ENCODE measurements at regions of chrX and their contacts with region 1.

Region 1: DNA sequence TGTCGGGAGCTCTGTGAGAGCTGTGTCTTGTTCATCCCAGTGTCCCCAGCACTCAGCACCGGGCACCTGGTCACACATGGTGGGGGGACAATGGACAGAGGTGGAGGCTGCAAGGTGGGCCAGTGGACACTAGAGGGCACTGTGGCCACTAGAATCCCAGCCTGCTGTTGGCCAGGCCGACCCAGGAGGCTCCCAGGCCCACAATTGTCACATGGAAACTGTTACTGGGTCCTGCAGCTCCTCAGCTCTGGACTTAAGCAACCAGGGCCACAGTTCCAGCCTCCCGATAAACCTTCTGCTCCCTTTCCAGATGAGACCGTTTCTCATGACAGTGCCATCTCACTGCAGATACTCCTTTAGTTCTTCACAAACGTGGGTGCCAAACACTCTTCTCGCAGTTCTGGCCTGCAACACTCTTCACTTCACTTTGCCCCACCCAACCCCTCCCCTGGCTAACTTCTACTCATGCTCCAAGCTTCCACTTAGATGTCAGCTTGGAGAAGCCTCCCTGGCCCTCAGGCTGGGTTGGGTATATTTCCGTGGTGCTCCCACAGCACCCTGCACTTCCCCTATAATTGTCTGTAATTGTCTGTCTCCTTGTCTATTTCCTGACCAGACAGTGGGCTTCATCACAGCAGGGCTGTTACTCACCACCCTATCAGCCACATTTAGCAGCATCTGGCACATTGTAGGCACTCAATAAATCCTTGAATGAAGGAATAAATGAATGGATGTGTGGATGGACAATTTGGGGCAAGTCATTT is 3.5 kb upstream of the IQSEC2 start:
- DNase-seq: peak; percentile 62
- H3K4me3 Mint-ChIP-seq: no peak overlapping the region
- H3K27ac Mint-ChIP-seq: no peak overlapping the region
- H3K4me1 Mint-ChIP-seq: peaks cover 33% of the 10 kb centered on the region
- H3K27me3 Mint-ChIP-seq: peaks cover 69% of the 10 kb centered on the region
- CTCF ChIP-seq: peak; percentile 86

Region 2: GRCh38 chrX:53224860-53225797 is 59.7 kb before region 1 on chrX and contains the start of gene KDM5C:
- CTCF ChIA-PET with region 1: interaction called, 12 read pairs
- POLR2A ChIA-PET with region 1: interaction called, 14 read pairs
- intact Hi-C with region 1: no loop called
- DNase-seq: peak; percentile 96
- H3K4me3 Mint-ChIP-seq: peak within 1 kb of the TSS; percentile 98
- H3K27ac Mint-ChIP-seq: peak within 1 kb of the TSS; percentile 100
- H3K4me1 Mint-ChIP-seq: peaks cover 22% of the 10 kb centered on the region
- H3K27me3 Mint-ChIP-seq: peaks cover 6% of the 10 kb centered on the region
- CTCF ChIP-seq: no peak
- total RNA-seq, gene KDM5C: 163 and 167 TPM in 2 replicates

Region 3: GRCh38 chrX:53244610-53245009 is 40.3 kb before region 1 on chrX:
- CTCF ChIA-PET with region 1: interaction called, 6 read pairs
- POLR2A ChIA-PET with region 1: no interaction called
- intact Hi-C with region 1: loop called (anchors 2 kb)
- DNase-seq: no peak
- H3K4me3 Mint-ChIP-seq: no peak overlapping the region
- H3K27ac Mint-ChIP-seq: no peak overlapping the region
- H3K4me1 Mint-ChIP-seq: no peaks in the 10 kb centered on the region
- H3K27me3 Mint-ChIP-seq: peaks cover 21% of the 10 kb centered on the region
- CTCF ChIP-seq: peak; percentile 33

Region 4: DNA sequence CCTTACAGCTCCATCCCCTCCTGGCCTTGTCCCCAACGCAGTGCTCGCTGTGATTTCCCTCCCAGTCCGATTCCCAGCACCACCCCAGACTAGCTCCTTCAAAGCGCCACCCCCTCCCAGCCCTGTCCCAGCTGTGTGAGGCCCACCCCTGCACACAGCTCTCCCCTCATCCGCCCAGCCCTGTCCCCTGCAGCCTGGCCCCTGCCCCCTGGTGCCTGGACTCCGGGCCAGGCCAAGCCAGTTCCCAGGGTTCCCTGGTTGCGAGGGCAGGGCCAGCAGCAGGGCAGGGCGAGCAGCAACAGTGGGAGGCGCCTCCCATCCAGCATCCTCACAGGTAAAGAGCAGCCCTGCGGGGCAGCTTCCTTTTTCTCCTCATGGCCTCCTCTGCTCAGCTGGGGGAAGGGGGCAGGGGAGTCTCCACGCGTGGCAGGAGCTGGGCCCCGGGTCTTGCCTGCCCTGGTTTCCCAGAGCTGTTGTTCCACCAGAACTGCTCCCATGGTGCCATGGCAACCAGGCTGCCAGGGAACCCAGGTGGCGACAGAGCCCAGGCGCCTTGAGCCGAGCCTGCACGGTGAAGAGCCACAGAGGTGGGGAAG is 28.3 kb before region 1 on chrX:
- CTCF ChIA-PET with region 1: interaction called, 12 read pairs
- POLR2A ChIA-PET with region 1: no interaction called
- intact Hi-C with region 1: no loop called
- DNase-seq: no peak
- H3K4me3 Mint-ChIP-seq: no peak overlapping the region
- H3K27ac Mint-ChIP-seq: no peak overlapping the region
- H3K4me1 Mint-ChIP-seq: peaks cover 7% of the 10 kb centered on the region
- H3K27me3 Mint-ChIP-seq: peaks cover 52% of the 10 kb centered on the region
- CTCF ChIP-seq: no peak

Region 5: DNA sequence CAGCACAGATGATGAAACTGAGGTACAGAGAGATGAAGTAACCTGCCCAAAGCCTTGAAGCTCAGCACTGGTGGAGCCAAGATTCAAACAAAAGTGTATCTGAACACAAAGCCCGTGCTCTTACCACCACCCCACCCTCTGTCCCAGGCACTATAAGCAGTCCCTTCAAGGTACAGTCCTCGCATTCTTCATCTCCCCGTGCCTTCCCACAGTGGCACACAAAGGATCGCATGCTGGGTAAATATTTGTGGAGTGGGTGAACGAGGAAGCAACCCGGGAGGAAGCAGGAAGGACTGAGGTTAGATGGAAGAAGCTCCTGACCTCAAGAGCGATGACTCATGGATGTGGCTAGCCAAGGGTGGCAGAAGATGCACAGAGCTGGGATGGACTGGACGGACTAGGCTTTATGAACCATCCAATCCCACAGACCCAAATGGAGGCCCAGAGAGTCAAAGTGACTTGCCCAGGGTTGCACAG is 21.9 kb before region 1 on chrX:
- CTCF ChIA-PET with region 1: interaction called, 12 read pairs
- POLR2A ChIA-PET with region 1: interaction called, 22 read pairs
- intact Hi-C with region 1: loop called (anchors 2 kb)
- DNase-seq: peak; percentile 81
- H3K4me3 Mint-ChIP-seq: no peak overlapping the region
- H3K27ac Mint-ChIP-seq: no peak overlapping the region
- H3K4me1 Mint-ChIP-seq: peaks cover 30% of the 10 kb centered on the region
- H3K27me3 Mint-ChIP-seq: peaks cover 39% of the 10 kb centered on the region
- CTCF ChIP-seq: no peak

Region 6: DNA sequence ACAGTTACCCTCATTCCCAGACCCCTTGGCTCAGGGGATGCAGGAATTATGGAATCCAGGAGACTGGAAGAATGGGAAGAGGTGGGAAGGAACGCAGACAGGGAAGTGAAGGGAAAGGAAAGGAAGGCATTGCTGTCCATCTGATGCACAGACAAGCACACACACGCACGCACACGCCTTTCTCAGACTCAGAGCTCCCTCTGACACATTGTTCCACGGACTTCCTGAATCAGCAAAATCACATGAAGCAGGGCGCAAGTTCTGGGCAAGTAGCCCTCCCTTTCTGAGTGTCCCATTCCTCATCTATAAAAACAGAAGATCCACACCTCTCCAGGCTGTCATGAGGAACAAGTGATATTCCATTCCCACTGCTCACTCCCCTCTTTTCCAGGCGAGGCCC is 16.7 kb before region 1 on chrX:
- CTCF ChIA-PET with region 1: interaction called, 74 read pairs
- POLR2A ChIA-PET with region 1: interaction called, 22 read pairs
- intact Hi-C with region 1: loop called (anchors 2 kb)
- DNase-seq: peak; percentile 68
- H3K4me3 Mint-ChIP-seq: no peak overlapping the region
- H3K27ac Mint-ChIP-seq: no peak overlapping the region
- H3K4me1 Mint-ChIP-seq: peaks cover 30% of the 10 kb centered on the region
- H3K27me3 Mint-ChIP-seq: no peaks in the 10 kb centered on the region
- CTCF ChIP-seq: no peak

Region 7: DNA sequence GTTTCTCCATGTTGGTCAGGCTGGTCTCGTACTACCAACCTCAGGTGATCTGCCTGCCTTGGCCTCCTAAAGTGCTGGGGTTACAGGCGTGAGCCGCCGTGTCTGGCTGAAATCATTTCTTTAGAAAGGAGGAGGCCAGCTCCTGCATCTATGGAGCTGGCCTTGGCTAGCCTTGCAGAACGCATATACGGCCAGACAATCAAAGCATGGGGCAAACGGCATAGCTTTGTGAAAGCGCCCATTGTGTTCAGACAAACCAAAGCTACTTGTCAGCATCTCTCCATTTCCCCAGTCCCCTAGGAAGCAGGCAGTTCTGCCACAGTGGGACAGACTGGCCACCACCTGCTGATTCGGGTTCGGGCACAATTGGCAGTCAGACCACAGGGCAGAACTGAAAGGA is 45.5 kb after region 1 on chrX:
- CTCF ChIA-PET with region 1: interaction called, 35 read pairs
- POLR2A ChIA-PET with region 1: interaction called, 5 read pairs
- intact Hi-C with region 1: no loop called
- DNase-seq: no peak
- H3K4me3 Mint-ChIP-seq: no peak overlapping the region
- H3K27ac Mint-ChIP-seq: no peak overlapping the region
- H3K4me1 Mint-ChIP-seq: no peaks in the 10 kb centered on the region
- H3K27me3 Mint-ChIP-seq: peaks cover 98% of the 10 kb centered on the region
- CTCF ChIP-seq: no peak